ENCODE measurements at regions of chr18 and their contacts with region 1.

Region 1: DNA sequence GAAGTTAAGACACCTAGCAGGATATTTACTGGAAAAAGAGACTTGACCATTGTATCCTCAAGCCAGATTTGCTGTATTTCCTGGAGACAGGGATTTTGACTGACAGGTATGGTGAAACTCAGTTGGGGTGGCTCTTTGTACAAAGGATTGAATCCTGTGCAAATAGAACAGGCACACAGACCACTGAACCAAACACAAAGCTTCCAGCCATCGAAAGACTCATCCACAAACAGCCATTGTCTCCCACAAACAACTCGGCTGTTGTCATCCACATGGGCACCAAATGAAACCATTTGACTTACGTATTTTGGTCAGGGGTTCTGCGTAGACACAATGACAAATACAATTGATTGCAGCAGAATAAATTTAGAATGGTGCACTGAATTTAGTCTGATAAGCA is 15.9 kb downstream of the RNF152 start:
- DNase-seq: peak in 4 of 10 donors; percentile 46 to 78 (median 61)
- H3K4me3 ChIP-seq: peak overlapping the region in 35 of 59 donors; percentile 0 to 50 (median 20)
- H3K27ac ChIP-seq: peak overlapping the region in 51 of 59 donors; percentile 11 to 88 (median 71)
- H3K27me3 ChIP-seq: peaks cover 0 to 2% (median 0%) of the 10 kb centered on the region in 45 donors
- CTCF ChIP-seq: peak in 3 of 56 donors; percentile 11 to 13 (median 12)

Region 2: GRCh38 chr18:61842146-61842545 is 34.8 kb before region 1 on chr18:
- intact Hi-C with region 1: loop called in 1 of 2 experiments (anchors 2 kb)
- DNase-seq: peak in 2 of 10 donors; percentile 48 to 60
- H3K4me3 ChIP-seq: peak overlapping the region in 2 of 59 donors; percentile 12 to 35
- H3K27ac ChIP-seq: peak overlapping the region in 54 of 59 donors; percentile 0 to 91 (median 70)
- H3K27me3 ChIP-seq: no peaks in the 10 kb centered on the region
- CTCF ChIP-seq: peak in 1 of 56 donors; percentile 12

Measured in dorsolateral prefrontal cortex (tissue), 120 donors.